ENCODE measurements at regions of chr17 and their contacts with region 1.

Region 1: DNA sequence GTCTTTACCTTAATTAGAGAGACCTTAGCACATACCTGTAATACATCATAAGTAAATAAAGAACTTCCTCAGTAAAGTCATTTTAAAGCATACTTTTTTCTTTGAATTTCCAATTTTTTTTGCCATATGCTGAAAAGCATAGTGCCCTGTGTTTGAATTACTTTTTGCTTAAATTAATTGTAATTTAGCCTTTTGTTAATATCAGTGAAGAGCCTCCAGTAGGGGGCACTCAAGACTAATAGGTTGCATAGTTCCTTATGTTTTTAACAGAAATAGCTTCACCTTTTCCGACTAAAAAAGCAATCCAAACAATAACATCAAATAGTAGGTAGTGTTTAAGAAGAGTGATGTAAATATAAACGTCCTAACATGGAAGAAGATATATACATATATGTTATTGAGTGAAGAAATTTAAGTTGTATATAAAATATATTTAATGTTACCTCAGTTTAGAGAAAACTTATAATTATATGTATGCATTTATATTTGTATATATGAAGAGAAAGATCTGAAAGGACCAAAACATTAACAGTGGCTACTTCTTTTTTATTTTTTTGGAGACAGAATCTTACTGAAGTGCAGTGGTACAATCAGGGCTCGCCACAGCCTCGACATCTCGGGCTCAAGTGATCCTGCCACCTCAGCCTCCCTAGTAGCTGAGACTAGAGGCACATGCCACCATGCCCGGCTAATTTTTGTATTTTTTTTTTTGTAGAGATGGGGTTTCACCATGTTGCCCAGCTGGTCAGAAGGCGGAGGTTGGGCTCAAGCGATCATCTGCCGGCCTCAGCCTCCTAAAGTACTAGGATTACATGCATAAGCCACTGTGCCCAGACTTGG is 18.8 kb downstream of the RAD51C start:
- DNase-seq: peak; percentile 49
- H3K4me3 ChIP-seq: no peak overlapping the region; a peak in 1 of 4 replicates
- H3K27ac ChIP-seq: no peak overlapping the region
- H3K4me1 ChIP-seq: no peaks in the 10 kb centered on the region
- H3K27me3 ChIP-seq: no peaks in the 10 kb centered on the region
- CTCF ChIP-seq: peak; percentile 99
- EP300 ChIP-seq: no peak
- RAD21 ChIP-seq: peak; percentile 97

Region 2: DNA sequence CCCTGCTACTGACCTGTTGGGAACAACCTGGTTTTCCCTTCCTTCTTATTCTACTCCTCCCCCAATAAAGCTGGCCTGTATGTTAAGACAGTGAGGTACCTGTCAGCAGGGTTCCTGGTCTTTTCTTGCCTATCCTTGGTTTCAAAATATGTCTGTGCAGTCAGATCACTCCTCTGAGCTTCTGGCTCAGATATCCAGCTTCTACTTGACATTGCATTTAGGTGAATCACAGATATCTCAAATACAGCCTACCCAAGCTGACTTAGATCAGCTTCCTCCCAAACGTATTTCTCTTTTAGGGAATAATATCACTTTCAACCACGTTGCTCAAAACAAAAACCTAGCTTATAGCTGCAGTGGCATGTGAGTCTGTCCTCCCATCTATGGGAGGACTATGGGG is 68.0 kb before region 1 on chr17:
- CTCF ChIA-PET with region 1: interaction called, 11 read pairs
- POLR2A ChIA-PET with region 1: no interaction called
- DNase-seq: no peak
- H3K4me3 ChIP-seq: peak overlapping the region in 1 of 2 experiments; percentile 2; a peak in 1 of 4 replicates
- H3K27ac ChIP-seq: no peak overlapping the region
- H3K4me1 ChIP-seq: no peaks in the 10 kb centered on the region
- H3K27me3 ChIP-seq: no peaks in the 10 kb centered on the region
- CTCF ChIP-seq: no peak
- EP300 ChIP-seq: no peak; a peak in 1 of 4 replicates
- RAD21 ChIP-seq: no peak

Region 3: GRCh38 chr17:58734040-58734872 is 23.1 kb after region 1 on chr17:
- CTCF ChIA-PET with region 1: interaction called, 11 read pairs
- POLR2A ChIA-PET with region 1: no interaction called
- DNase-seq: no peak
- H3K4me3 ChIP-seq: no peak overlapping the region
- H3K27ac ChIP-seq: no peak overlapping the region
- H3K4me1 ChIP-seq: no peaks in the 10 kb centered on the region
- H3K27me3 ChIP-seq: no peaks in the 10 kb centered on the region
- CTCF ChIP-seq: no peak
- EP300 ChIP-seq: no peak
- RAD21 ChIP-seq: no peak

Region 4: GRCh38 chr17:58755577-58756245 is 44.6 kb after region 1 on chr17 and contains the start of gene PPM1E:
- CTCF ChIA-PET with region 1: interaction called, 22 read pairs
- POLR2A ChIA-PET with region 1: no interaction called
- DNase-seq: peak; percentile 98
- H3K4me3 ChIP-seq: peak within 1 kb of the TSS; percentile 74 to 78
- H3K27ac ChIP-seq: peak within 1 kb of the TSS in 1 of 2 experiments; percentile 81; a peak in 2 of 4 replicates
- H3K4me1 ChIP-seq: peaks cover 0 to 11% of the 10 kb centered on the region in 2 experiments; a peak in 2 of 4 replicates
- H3K27me3 ChIP-seq: peaks cover 24% of the 10 kb centered on the region
- CTCF ChIP-seq: no peak
- EP300 ChIP-seq: no peak
- RAD21 ChIP-seq: 0 out of 2 replicates have a peak, but pooled peaks have one; percentile 3
- polyA plus RNA-seq, gene PPM1E: 0.08 and 0.34 TPM in 2 replicates

Region 5: GRCh38 chr17:58991718-58992331 is 280.7 kb after region 1 on chr17:
- CTCF ChIA-PET with region 1: interaction called, 204 read pairs
- POLR2A ChIA-PET with region 1: no interaction called
- DNase-seq: no peak
- H3K4me3 ChIP-seq: no peak overlapping the region
- H3K27ac ChIP-seq: peak overlapping the region in 1 of 2 experiments; percentile 9; a peak in 1 of 4 replicates
- H3K4me1 ChIP-seq: peaks cover 0 to 4% of the 10 kb centered on the region in 2 experiments; a peak in 1 of 4 replicates
- H3K27me3 ChIP-seq: no peaks in the 10 kb centered on the region
- CTCF ChIP-seq: no peak
- EP300 ChIP-seq: no peak
- RAD21 ChIP-seq: no peak

Region 6: DNA sequence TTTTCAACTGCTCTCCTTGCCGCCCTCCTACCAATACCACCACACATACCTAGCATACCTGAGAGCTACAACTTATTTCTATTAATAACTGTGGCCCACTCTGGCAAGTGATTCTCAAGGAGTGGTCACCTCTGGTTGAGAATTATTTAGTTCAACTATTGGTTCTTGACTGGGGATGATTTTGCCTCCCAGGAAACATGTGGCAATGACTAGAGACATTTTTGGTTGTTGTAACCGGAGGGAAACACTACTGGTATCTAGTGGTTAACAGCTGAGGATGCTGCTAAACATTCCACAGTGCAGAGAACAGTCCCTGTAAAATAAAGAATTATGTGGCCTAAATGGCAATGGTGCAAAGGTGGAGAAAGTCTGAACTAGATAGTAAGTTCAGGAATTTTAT is 298.9 kb after region 1 on chr17:
- CTCF ChIA-PET with region 1: interaction called, 204 read pairs
- POLR2A ChIA-PET with region 1: interaction called, 4 read pairs
- DNase-seq: no peak
- H3K4me3 ChIP-seq: no peak overlapping the region
- H3K27ac ChIP-seq: no peak overlapping the region
- H3K4me1 ChIP-seq: no peaks in the 10 kb centered on the region
- H3K27me3 ChIP-seq: no peaks in the 10 kb centered on the region
- CTCF ChIP-seq: no peak
- EP300 ChIP-seq: no peak
- RAD21 ChIP-seq: no peak

Measured in SK-N-SH (cell line).